PC-3 (cell line): ENCODE measurements at regions of chr2 and their contacts with region 1.

Region 1: GRCh38 chr2:176638167-176639015 is 369.1 kb downstream of the MTX2 start:
- DNase-seq: peak; percentile 78
- ATAC-seq: peak; percentile 61
- H3K4me3 ChIP-seq: peak overlapping the region; percentile 71
- H3K27ac ChIP-seq: peak overlapping the region; percentile 76
- H3K4me1 ChIP-seq: peaks cover 41% of the 10 kb centered on the region
- H3K27me3 ChIP-seq: no peaks in the 10 kb centered on the region
- CTCF ChIP-seq: peak; percentile 86

Region 2: GRCh38 chr2:175372704-175373701 is 1265.4 kb before region 1 on chr2:
- CTCF ChIA-PET with region 1: interaction called, 14 read pairs
- POLR2A ChIA-PET with region 1: no interaction called
- intact Hi-C with region 1: no loop called
- DNase-seq: peak; percentile 80
- ATAC-seq: peak; percentile 93
- H3K4me3 ChIP-seq: no peak overlapping the region
- H3K27ac ChIP-seq: peak overlapping the region; percentile 33
- H3K4me1 ChIP-seq: peaks cover 23% of the 10 kb centered on the region
- H3K27me3 ChIP-seq: no peaks in the 10 kb centered on the region
- CTCF ChIP-seq: no peak

Region 3: GRCh38 chr2:176140513-176141317 is 497.7 kb before region 1 on chr2:
- CTCF ChIA-PET with region 1: interaction called, 10 read pairs
- POLR2A ChIA-PET with region 1: no interaction called
- intact Hi-C with region 1: loop called (anchors 1 kb)
- DNase-seq: peak; percentile 85
- ATAC-seq: peak; percentile 68
- H3K4me3 ChIP-seq: peak overlapping the region; percentile 75
- H3K27ac ChIP-seq: no peak overlapping the region
- H3K4me1 ChIP-seq: peaks cover 9% of the 10 kb centered on the region
- H3K27me3 ChIP-seq: no peaks in the 10 kb centered on the region
- CTCF ChIP-seq: peak; percentile 94

Region 4: DNA sequence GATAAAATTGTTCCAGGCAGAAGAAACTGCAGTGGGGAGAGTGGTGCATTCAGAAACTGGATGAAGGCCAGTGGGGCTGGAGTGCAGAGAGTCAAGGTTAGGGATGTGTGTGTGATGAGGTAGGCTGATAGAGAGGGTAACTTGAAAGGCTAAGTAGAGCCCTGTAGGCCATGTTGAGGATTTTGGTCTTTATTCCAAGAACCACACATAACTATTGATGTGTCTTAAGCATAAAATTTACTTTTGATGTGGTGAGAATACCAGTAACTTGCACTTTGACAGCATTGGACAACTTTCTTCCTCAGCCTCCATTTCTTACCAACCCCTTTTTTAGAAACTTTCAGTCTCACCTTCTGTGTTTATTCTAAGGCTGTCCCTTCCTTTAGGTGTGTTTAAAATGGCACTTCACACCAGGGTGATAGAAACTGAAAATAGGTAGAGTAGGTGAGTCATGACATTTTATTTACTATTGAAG is 346.5 kb before region 1 on chr2:
- CTCF ChIA-PET with region 1: no interaction called
- POLR2A ChIA-PET with region 1: no interaction called
- intact Hi-C with region 1: loop called (anchors 10 kb)
- DNase-seq: peak; percentile 50
- ATAC-seq: peak; percentile 93
- H3K4me3 ChIP-seq: no peak overlapping the region
- H3K27ac ChIP-seq: peak overlapping the region; percentile 14; the same call in 1 of the 2 replicates
- H3K4me1 ChIP-seq: peaks cover 19% of the 10 kb centered on the region
- H3K27me3 ChIP-seq: no peaks in the 10 kb centered on the region
- CTCF ChIP-seq: no peak

Region 5: GRCh38 chr2:176554101-176555048 is 84.0 kb before region 1 on chr2:
- CTCF ChIA-PET with region 1: interaction called, 5 read pairs
- POLR2A ChIA-PET with region 1: no interaction called
- intact Hi-C with region 1: loop called (anchors 1 kb)
- DNase-seq: peak; percentile 85
- ATAC-seq: peak; percentile 52
- H3K4me3 ChIP-seq: peak overlapping the region; percentile 72
- H3K27ac ChIP-seq: peak overlapping the region; percentile 54
- H3K4me1 ChIP-seq: peaks cover 32% of the 10 kb centered on the region
- H3K27me3 ChIP-seq: no peaks in the 10 kb centered on the region
- CTCF ChIP-seq: peak; percentile 89

Region 6: GRCh38 chr2:176613323-176613987 is 24.9 kb before region 1 on chr2:
- CTCF ChIA-PET with region 1: interaction called, 5 read pairs
- POLR2A ChIA-PET with region 1: interaction called, 11 read pairs
- intact Hi-C with region 1: loop called (anchors 1 kb)
- DNase-seq: peak; percentile 69
- ATAC-seq: peak; percentile 56
- H3K4me3 ChIP-seq: peak overlapping the region; percentile 29; the same call in 1 of the 2 replicates
- H3K27ac ChIP-seq: peak overlapping the region; percentile 74
- H3K4me1 ChIP-seq: peaks cover 59% of the 10 kb centered on the region
- H3K27me3 ChIP-seq: no peaks in the 10 kb centered on the region
- CTCF ChIP-seq: no peak

Region 7: GRCh38 chr2:176879426-176879995 is 241.1 kb after region 1 on chr2:
- CTCF ChIA-PET with region 1: no interaction called
- POLR2A ChIA-PET with region 1: no interaction called
- intact Hi-C with region 1: no loop called
- DNase-seq: no peak
- ATAC-seq: no peak
- H3K4me3 ChIP-seq: no peak overlapping the region
- H3K27ac ChIP-seq: no peak overlapping the region
- H3K4me1 ChIP-seq: no peaks in the 10 kb centered on the region
- H3K27me3 ChIP-seq: peaks cover 21% of the 10 kb centered on the region; the same call in 1 of the 2 replicates
- CTCF ChIP-seq: no peak